Activated T-helper 1 cell treated with anti-CD3 and anti-CD28 coated beads, Interleukin-12 subunit alpha, Interleukin-12 subunit beta, Interleukin-2, Interleukin-4 antibody, amounts not matched to agents 30 ng/mL and 10 ng/mL and 1 ng/mL, durations not matched to agents 14 hours and 24 hours and 36 hours (primary cell): ENCODE measurements at regions of chr5 and their contacts with region 1.

Region 1: DNA sequence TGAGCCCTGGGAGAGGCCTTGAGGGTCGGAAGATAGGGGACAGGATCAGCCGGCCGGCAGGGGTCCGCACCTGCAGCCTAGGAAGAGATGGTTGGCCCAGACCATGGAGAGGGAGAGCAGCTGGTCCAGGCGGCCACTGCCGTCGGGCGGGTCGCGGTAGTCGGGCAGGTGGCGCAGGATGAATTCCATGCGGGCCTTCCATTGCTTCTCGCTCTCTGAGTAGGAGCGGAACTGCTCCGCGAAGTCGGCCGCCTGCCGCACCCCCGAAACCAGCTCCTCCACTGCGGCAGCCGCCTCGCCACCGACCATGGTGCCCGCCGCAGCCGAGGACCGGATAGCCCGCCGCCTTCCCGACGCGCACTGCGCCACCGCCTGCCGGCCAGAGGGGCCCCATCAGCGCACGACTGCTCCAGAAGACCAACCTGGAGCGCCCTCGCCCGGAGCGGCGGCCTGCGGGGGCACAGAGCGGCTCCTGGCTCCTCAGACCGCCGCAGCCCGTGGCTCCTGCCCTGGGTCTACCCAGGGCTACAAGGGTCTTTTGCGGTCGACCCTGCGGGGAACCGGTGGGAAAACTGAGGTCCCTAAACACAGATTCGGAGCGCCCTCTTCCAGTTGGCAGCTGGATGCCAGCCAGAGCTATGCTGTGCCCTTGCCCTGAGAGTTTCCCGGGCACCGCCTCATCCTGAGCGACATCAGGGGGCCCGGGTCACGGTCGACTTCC is at the start of gene CDKN2AIPNL:
- DNase-seq: peak; percentile 87
- H3K4me3 Mint-ChIP-seq: peak within 1 kb of the TSS; percentile 97
- H3K27ac Mint-ChIP-seq: peak within 1 kb of the TSS; percentile 90
- H3K4me1 Mint-ChIP-seq: peaks cover 26% of the 10 kb centered on the region
- H3K27me3 Mint-ChIP-seq: no peaks in the 10 kb centered on the region
- total RNA-seq, gene CDKN2AIPNL: 33.6 and 35.6 TPM in 2 replicates

Region 2: DNA sequence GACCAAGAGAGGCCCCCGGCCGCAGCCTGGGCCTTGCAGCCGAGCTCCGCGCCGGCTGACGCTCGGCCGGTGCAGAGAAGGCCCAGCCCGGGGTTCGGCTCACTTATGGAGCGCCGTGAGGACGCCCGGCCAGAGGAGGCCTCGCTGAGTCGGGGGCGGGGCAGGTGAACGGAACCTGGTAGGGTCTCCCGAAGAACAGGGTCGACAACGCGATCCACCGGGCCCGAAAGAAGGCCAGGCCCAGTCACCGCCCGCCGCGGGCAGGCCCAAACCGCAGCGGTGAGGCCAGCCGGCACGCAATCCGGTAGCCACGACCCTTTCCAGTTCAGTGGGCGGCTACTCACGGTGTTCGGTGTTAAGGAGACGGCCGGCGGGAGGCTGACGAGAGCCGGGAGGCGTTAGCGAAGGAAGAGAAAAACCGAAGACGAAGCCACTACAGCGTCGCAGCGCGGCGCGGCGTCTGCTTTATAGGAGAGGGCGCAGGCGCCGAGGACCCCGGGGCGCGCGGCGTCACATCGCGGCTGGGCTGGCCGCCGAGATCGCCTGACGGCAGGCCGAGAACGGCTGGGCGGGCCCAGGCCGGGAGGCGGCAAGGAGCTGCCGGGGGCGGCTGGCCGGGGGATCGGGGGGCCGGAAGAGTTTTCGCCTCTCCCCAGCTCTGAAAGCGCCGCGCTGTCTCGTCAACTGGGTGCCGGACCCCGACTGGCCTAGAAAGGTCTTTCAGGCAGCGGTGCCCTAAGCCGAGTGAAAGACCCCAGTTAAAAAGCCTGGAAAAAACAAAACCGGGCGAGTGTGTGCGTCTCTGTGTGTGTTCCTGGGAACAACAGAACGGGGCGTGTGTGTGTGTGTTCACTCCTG is 235.0 kb before region 1 on chr5 and contains the start of gene SKP1:
- intact Hi-C with region 1: loop called (anchors 5 kb)
- DNase-seq: peak; percentile 85
- H3K4me3 Mint-ChIP-seq: peak within 1 kb of the TSS; percentile 96
- H3K27ac Mint-ChIP-seq: peak within 1 kb of the TSS; percentile 97
- H3K4me1 Mint-ChIP-seq: peaks cover 28% of the 10 kb centered on the region
- H3K27me3 Mint-ChIP-seq: peaks cover 6% of the 10 kb centered on the region
- total RNA-seq, gene SKP1: 259 and 265 TPM in 2 replicates

Region 3: DNA sequence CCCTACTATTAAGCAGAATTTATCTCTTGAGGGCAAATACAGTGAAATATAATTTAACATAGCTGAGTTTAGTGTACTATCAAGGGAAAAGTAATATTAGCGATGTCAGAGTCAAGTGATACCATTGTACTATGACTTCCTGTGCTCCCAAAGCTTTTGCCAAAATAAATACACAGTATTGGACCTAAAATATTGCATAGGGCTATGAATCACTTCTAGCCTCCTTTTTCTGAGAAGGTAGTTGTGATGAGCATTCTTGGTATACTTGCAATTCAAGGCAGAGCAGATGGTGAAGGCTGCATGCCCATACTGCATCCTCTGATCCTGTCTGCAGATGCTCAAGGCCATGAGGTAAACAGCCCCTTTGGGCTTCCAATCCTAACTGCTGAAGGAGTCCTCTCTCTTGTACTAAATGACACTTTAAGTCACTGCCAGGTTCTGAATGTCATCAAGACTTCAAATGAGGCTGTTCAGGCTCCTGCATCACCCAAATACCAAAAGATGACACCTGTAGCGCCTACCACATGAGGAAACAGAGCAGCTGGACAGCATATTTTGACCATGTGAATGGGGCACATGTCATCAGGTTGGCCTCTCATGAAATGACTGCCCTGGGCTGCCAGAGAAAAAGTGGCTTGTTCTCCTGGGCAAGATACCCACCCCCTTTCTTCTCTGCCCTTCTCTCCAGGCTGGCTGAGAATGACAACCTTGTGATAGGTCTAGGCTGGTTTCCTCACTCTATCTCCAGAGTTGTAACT is 156.1 kb before region 1 on chr5:
- intact Hi-C with region 1: no loop called
- DNase-seq: no peak
- H3K4me3 Mint-ChIP-seq: no peak overlapping the region
- H3K27ac Mint-ChIP-seq: no peak overlapping the region
- H3K4me1 Mint-ChIP-seq: no peaks in the 10 kb centered on the region
- H3K27me3 Mint-ChIP-seq: peaks cover 9% of the 10 kb centered on the region

Region 4: GRCh38 chr5:134365604-134366003 is 46.1 kb before region 1 on chr5:
- intact Hi-C with region 1: loop called (anchors 1 kb)
- DNase-seq: no peak
- H3K4me3 Mint-ChIP-seq: peak overlapping the region; percentile 0
- H3K27ac Mint-ChIP-seq: peak overlapping the region; percentile 2
- H3K4me1 Mint-ChIP-seq: peaks cover 31% of the 10 kb centered on the region
- H3K27me3 Mint-ChIP-seq: no peaks in the 10 kb centered on the region

Region 5: DNA sequence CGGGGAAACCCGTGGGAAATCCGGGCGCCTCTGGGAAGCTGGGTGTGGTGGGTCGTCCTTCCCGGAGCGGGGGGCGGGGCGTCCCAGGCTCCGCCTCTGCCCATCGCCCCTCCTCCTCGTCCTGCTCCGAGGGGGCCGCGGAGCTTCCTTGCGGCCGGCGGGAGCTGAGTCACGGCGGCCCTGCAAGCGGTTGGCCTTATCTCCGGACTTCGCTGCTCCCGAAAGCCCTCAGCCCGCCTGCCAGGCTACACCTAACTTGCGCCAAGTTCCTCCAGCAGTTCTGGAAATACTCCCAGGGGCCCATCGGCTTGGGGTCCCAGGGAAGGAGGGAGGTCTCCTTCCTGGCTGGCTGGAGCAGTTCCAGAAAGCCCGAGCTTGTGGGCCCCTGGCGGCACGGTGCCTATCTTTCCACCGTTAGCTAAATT is 54.1 kb after region 1 on chr5:
- intact Hi-C with region 1: loop called (anchors 5 kb)
- DNase-seq: peak; percentile 53
- H3K4me3 Mint-ChIP-seq: peak overlapping the region; percentile 76
- H3K27ac Mint-ChIP-seq: peak overlapping the region; percentile 68
- H3K4me1 Mint-ChIP-seq: peaks cover 17% of the 10 kb centered on the region
- H3K27me3 Mint-ChIP-seq: peaks cover 3% of the 10 kb centered on the region

Region 6: DNA sequence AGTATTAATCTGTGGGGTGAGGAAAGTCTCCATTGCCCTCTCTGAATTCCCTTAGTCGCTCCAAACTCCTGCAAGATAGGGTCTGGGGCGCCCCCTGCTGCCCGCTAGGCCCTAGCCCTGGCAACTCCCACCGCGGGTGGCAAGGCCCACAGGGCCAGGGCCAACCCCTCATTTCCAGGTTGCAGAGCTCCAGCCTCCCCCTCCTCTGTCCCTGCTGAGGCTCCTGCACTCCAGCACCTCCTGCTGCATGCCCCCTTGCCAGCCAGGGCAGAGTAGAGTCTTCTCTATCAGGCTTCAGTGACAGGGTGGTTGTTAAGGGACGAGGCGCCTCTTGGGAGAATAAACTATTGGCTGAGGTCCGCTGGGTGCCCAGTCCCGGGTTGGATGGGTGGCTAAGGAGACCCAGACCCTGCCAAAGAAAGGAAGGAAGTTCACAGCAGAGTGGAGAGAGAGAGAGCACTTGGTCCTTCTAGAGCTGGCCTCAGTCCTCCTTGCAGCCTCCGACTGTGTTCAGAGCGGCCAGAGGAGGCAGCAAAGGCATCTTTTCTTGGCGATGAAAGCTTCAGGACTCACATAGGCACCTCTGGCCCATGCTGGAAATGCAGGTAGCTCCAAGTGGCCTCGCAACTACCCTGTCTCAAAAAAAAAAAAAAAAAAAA is 175.3 kb after region 1 on chr5:
- intact Hi-C with region 1: loop called (anchors 1 kb)
- DNase-seq: peak; percentile 72
- H3K4me3 Mint-ChIP-seq: no peak overlapping the region
- H3K27ac Mint-ChIP-seq: peak overlapping the region; percentile 52
- H3K4me1 Mint-ChIP-seq: peaks cover 14% of the 10 kb centered on the region
- H3K27me3 Mint-ChIP-seq: no peaks in the 10 kb centered on the region